HEK293T (cell line): ENCODE measurements at regions of chr19 and their contacts with region 1.

Region 1: DNA sequence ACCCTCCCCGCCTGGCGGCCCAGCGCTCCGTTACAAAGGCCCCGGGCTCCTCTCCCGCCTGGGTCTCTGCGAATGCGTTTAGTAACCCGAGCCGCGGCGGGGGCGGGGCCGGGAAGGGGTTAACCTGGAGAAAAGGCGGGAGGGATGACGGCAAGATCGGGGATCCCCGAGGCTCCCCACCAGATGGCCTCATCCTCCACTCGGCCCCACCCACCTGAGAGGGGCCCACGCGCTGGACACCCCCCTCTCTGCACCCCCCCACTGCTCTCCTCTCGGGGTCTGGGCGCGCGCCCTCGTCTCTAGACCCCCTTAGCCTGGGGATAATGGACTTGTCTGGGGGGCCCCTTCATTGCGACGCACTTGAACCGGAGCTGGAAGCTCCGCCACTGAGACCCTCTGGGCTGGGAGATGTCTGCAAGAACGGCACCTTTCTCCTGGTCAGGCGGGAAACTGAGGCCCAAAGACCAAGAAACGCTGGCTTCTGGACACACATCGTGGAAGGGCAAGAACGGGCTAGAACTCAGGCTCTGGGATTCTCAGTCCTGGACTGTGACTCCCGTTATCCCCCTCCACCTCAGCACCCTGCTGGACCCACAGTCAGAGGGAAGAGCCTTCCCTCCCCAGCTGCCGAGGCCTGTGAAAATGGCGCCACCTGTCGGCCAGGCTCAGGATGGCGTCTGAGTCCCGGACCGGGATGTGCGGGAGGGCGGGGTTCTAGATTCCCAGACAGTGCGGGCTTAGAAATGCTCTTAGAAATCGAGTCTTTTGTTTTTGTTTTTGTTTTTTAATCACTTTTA is 2.9 kb upstream of the LTBP4 start:
- DNase-seq: peak; percentile 79

Region 2: GRCh38 chr19:40549007-40549708 is 49.2 kb before region 1 on chr19:
- CTCF ChIA-PET with region 1: interaction called, 10 read pairs
- POLR2A ChIA-PET with region 1: interaction called, 4 read pairs
- DNase-seq: peak; percentile 91

Region 3: DNA sequence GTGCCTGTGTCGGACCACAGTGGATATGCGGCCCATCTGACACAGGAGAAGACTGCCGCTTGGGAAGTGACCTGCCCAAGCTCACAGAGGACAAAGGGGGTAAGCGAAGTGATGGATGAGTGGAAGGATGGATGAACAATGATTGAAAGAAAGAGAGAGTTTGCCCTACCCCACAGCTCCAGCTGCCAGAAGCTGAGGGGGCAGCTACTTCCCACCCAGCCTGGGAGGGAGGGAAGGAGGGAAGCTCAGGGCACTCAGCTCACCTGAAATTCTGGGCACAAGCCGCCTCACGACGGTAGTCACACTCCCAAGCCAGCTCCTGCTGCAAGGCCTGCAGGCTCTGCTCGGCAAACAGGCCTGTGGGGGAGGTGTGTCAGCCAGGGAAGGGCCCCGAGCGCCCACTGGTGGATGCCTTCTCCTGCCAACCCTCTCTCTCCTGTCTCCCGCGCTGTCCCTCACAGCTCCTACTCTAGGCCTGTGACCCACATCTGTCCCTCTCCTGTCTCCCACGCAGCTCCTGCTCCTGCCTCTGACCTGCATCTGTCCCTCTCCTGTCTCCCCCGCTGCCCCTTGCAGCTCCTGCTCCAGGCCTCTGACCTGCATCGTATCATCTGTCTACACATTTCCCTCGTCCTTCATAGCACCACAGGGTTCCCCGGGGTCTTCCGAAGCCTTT is 104.2 kb after region 1 on chr19:
- CTCF ChIA-PET with region 1: no interaction called
- POLR2A ChIA-PET with region 1: no interaction called
- DNase-seq: peak; percentile 63